GM12878 (cell line): ENCODE measurements at regions of chr17 and their contacts with region 1.

Region 1: GRCh38 chr17:38868817-38869525 is 887 bp upstream of the LASP1 start:
- DNase-seq: peak; percentile 77
- ATAC-seq: peak; percentile 62
- H3K4me3 ChIP-seq: peak overlapping the region; percentile 87
- H3K27ac ChIP-seq: peak overlapping the region; percentile 98
- H3K4me1 ChIP-seq: peaks cover 19% of the 10 kb centered on the region
- H3K27me3 ChIP-seq: no peaks in the 10 kb centered on the region
- CTCF ChIP-seq: peak; percentile 43 to 49 (median 46)
- EP300 ChIP-seq: peak in 1 of 2 experiments; percentile 46; a peak in 1 of 4 replicates
- POLR2A ChIP-seq: peak; percentile 92
- RAD21 ChIP-seq: 0 out of 2 replicates have a peak, but pooled peaks have one; percentile 16

Region 2: DNA sequence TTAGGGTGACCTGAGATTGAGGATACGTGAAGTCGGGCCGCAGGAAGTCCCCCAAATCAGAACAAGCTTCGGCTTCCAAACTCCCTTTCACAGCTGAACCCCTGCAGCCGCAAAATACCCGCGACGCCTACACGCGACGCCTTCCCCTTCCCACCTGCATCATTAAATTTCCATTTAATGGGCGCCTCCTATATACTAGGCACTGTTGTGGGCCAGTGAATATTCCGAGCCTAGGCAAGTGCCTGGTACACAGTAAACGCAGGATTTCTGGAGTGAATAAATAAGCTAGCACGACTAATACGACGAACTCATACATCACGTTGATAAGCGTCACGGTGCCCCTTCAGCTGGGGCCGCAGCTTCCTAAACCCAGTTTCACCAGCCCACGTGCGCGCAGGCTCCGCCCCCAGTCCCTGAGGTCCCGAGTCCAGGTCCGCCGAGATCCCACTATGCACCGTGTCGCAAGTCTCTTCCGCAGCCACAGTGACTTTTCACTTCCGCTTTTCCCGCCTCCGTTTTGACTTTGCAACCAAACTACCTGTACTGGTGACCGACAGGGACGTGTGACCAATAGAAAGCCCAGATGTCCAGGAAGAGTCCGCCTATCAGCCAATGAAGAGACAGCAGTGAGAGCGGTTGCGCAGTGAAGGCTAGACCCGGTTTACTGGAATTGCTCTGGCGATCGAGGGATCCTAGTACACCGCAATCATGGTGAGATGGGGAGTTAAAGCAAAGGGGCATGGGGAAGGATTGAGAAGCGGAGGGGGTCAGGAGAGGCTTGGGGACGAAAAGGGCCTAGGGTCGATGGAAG is 116.6 kb before region 1 on chr17 and contains the start of gene PSMB3:
- CTCF ChIA-PET with region 1: interaction called, 4 read pairs
- POLR2A ChIA-PET with region 1: interaction called, 8 read pairs
- RAD21 ChIA-PET with region 1: interaction called, 5 read pairs
- SMC1A ChIA-PET with region 1: no interaction called
- in situ Hi-C with region 1: no loop called
- intact Hi-C with region 1: loop called (anchors 2 kb)
- DNase-seq: peak; percentile 100
- ATAC-seq: peak; percentile 82
- H3K4me3 ChIP-seq: peak within 1 kb of the TSS; percentile 87
- H3K27ac ChIP-seq: peak within 1 kb of the TSS; percentile 86
- H3K4me1 ChIP-seq: peaks cover 15% of the 10 kb centered on the region; the same call in 1 of the 2 replicates
- H3K27me3 ChIP-seq: no peaks in the 10 kb centered on the region; a peak in 1 of 4 replicates
- CTCF ChIP-seq: no peak
- EP300 ChIP-seq: peak in 1 of 2 experiments; percentile 9; a peak in 1 of 4 replicates
- POLR2A ChIP-seq: peak; percentile 79
- RAD21 ChIP-seq: no peak
- polyA plus RNA-seq, gene PSMB3: 1,622 to 2,130 TPM

Region 3: GRCh38 chr17:38879878-38880682 is 11.1 kb after region 1 on chr17:
- CTCF ChIA-PET with region 1: interaction called, 27 read pairs
- POLR2A ChIA-PET with region 1: no interaction called
- RAD21 ChIA-PET with region 1: interaction called, 3 read pairs
- SMC1A ChIA-PET with region 1: interaction called, 7 read pairs
- in situ Hi-C with region 1: no loop called
- intact Hi-C with region 1: no loop called
- DNase-seq: no peak
- ATAC-seq: no peak
- H3K4me3 ChIP-seq: no peak overlapping the region
- H3K27ac ChIP-seq: no peak overlapping the region
- H3K4me1 ChIP-seq: peaks cover 42% of the 10 kb centered on the region
- H3K27me3 ChIP-seq: no peaks in the 10 kb centered on the region
- CTCF ChIP-seq: no peak
- EP300 ChIP-seq: no peak
- POLR2A ChIP-seq: no peak
- RAD21 ChIP-seq: no peak

Region 4: DNA sequence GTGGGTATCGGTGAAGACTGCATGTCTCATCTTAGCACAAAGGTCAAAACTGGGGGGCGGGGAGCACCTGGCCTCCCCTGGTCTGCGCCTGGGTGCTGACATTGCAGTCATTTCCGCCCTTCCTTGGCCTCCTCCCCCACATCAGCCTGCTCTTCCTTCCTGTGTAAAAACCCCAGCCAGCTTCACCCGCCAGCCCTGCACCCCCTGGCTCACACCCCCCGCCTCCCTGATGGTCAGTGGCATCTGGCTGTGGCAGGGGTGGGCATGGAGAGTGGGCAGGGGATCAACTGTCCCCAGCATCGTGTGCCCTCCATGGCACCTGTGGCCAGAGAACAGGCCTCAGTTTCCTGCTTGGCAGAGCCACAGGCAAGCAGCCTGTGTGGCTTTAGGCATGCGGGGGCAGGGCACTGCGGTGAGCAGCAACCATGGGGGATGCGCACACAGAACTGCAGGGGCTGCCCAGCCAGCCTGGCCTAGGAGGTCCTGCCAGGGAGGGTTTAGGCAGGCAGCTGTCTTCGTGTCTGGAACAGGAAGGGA is 29.9 kb after region 1 on chr17:
- CTCF ChIA-PET with region 1: interaction called, 6 read pairs
- POLR2A ChIA-PET with region 1: interaction called, 21 read pairs
- RAD21 ChIA-PET with region 1: interaction called, 10 read pairs
- SMC1A ChIA-PET with region 1: interaction called, 7 read pairs
- in situ Hi-C with region 1: no loop called
- intact Hi-C with region 1: no loop called
- DNase-seq: peak; percentile 64
- ATAC-seq: peak; percentile 97
- H3K4me3 ChIP-seq: peak overlapping the region; percentile 15; the same call in 1 of the 2 replicates
- H3K27ac ChIP-seq: peak overlapping the region; percentile 96
- H3K4me1 ChIP-seq: peaks cover 28% of the 10 kb centered on the region
- H3K27me3 ChIP-seq: no peaks in the 10 kb centered on the region
- CTCF ChIP-seq: no peak
- EP300 ChIP-seq: peak in 1 of 2 experiments; percentile 50; a peak in 1 of 4 replicates
- POLR2A ChIP-seq: peak; percentile 71
- RAD21 ChIP-seq: no peak

Region 5: DNA sequence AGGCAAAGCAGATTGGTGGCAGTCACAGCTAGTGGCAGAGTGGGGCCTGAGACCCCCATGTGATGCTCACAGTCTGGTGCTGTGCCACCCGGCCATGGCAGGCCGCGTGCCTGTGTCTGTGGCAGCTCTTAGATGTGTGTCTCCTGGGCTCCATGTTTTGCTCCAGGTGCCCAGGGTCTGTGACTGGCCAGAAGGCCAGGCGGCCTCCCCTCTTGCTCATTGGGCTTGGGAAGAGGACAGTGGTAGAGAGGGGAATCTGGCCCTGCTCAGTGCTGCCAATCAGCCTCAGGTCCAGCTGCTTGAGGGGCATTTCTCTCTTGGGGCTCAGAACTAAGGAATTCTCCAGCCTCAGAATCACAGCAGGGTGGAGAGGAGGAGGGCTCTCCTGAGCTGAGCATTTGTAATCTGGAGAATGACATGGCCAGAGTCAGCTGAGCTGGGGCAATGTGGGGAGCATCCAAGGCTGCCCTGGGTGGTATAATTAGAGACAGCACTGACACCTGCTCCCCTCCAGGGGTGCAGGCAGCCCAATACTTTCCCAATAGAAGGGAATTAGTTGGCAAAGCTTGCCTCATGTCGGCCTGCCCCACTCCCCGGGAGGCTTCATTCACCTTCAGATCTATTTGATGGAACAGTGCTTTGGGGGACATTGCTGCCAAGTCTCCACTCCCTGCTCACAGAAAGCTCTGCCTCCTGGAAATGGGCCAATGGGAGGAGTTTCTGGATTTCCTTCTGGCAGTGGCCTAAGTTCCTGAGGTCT is 53.7 kb after region 1 on chr17:
- CTCF ChIA-PET with region 1: interaction called, 14 read pairs
- POLR2A ChIA-PET with region 1: no interaction called
- RAD21 ChIA-PET with region 1: interaction called, 5 read pairs
- SMC1A ChIA-PET with region 1: interaction called, 6 read pairs
- in situ Hi-C with region 1: no loop called
- intact Hi-C with region 1: no loop called
- DNase-seq: no peak
- ATAC-seq: peak; percentile 40; the same call in 2 of the 3 replicates
- H3K4me3 ChIP-seq: no peak overlapping the region
- H3K27ac ChIP-seq: no peak overlapping the region
- H3K4me1 ChIP-seq: peaks cover 3% of the 10 kb centered on the region
- H3K27me3 ChIP-seq: no peaks in the 10 kb centered on the region
- CTCF ChIP-seq: no peak
- EP300 ChIP-seq: no peak
- POLR2A ChIP-seq: peak; percentile 51
- RAD21 ChIP-seq: no peak